ENCODE measurements at regions of chr3 and their contacts with region 1.

Region 1: DNA sequence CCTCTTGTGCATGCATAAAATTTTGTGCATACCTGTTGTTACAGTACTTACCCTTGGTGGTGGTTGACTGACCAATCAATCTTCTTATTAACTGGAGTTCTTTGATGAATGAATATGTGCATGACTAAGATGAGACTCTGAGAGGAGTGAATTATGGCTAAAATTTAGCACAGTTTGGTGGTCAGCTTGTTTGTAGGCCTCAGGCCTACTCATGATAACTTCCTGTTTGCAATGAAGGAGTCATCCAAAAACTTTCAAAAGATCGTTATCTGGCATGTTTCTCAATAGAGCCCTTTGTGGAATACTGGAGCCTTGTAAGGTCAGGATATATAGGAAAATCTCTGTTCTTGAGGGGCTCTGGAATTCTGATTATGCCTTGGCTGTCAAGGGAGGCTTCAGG is 66.5 kb downstream of the LEKR1 start:
- DNase-seq: no peak
- ATAC-seq: no peak
- H3K4me3 Mint-ChIP-seq: no peak overlapping the region
- H3K27ac Mint-ChIP-seq: no peak overlapping the region
- H3K4me1 Mint-ChIP-seq: no peaks in the 10 kb centered on the region
- H3K27me3 Mint-ChIP-seq: no peaks in the 10 kb centered on the region
- CTCF ChIP-seq: no peak

Region 2: GRCh38 chr3:156826144-156826895 is 66.4 kb before region 1 on chr3 and contains the start of gene LEKR1:
- CTCF ChIA-PET with region 1: no interaction called
- POLR2A ChIA-PET with region 1: interaction called, 10 read pairs
- intact Hi-C with region 1: no loop called
- DNase-seq: peak; percentile 74
- ATAC-seq: peak; percentile 73
- H3K4me3 Mint-ChIP-seq: peak within 1 kb of the TSS; percentile 90
- H3K27ac Mint-ChIP-seq: peak within 1 kb of the TSS; percentile 96
- H3K4me1 Mint-ChIP-seq: peaks cover 21% of the 10 kb centered on the region
- H3K27me3 Mint-ChIP-seq: no peaks in the 10 kb centered on the region
- CTCF ChIP-seq: no peak
- total RNA-seq, gene LEKR1: 2.8 and 2.9 TPM in 2 replicates

Region 3: DNA sequence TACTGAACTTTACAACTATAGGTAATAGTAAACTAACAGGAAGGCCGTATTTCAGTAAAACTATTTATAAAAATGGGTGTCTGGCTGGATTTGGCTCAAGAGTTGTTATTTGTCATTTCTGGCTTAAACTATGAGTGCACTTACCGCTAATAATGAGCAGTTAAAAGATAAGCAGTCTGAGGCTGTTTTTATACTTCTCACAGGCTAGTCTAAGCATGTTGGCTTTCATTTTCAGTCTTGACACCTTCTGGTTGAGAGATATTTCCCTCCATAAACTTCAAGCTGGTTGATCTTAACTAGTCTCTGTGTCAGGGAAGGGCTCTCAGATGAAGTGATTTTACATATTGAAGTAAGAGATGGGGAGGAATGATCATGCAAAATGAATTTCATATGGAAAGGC is 1313.3 kb after region 1 on chr3:
- CTCF ChIA-PET with region 1: no interaction called
- POLR2A ChIA-PET with region 1: no interaction called
- intact Hi-C with region 1: no loop called
- DNase-seq: no peak
- ATAC-seq: no peak
- H3K4me3 Mint-ChIP-seq: no peak overlapping the region
- H3K27ac Mint-ChIP-seq: no peak overlapping the region
- H3K4me1 Mint-ChIP-seq: peaks cover 4% of the 10 kb centered on the region
- H3K27me3 Mint-ChIP-seq: no peaks in the 10 kb centered on the region
- CTCF ChIP-seq: no peak